ENCODE measurements at regions of chr3 and their contacts with region 1.

Region 1: GRCh38 chr3:171772427-171773056 is 37.7 kb downstream of the PLD1 start:
- DNase-seq: peak in 1 of 2 donors; percentile 28
- ATAC-seq: peak in 1 of 2 donors; percentile 46
- H3K4me3 ChIP-seq: no peak overlapping the region
- H3K27ac ChIP-seq: no peak overlapping the region
- H3K4me1 ChIP-seq: peaks cover 0 to 5% of the 10 kb centered on the region in 2 donors
- H3K27me3 ChIP-seq: no peaks in the 10 kb centered on the region
- CTCF ChIP-seq: peak; percentile 35 to 62 (median 46)
- POLR2A ChIP-seq: no peak

Region 2: GRCh38 chr3:171646357-171647133 is 126.0 kb before region 1 on chr3:
- in situ Hi-C with region 1: loop called (anchors 5 to 25 kb)
- intact Hi-C with region 1: loop called (anchors 1 kb)
- DNase-seq: no peak
- ATAC-seq: peak; percentile 55 to 69
- H3K4me3 ChIP-seq: no peak overlapping the region
- H3K27ac ChIP-seq: peak overlapping the region in 2 of 4 donors; percentile 3 to 21
- H3K4me1 ChIP-seq: peaks cover 5 to 6% of the 10 kb centered on the region in 2 donors
- H3K27me3 ChIP-seq: no peaks in the 10 kb centered on the region
- CTCF ChIP-seq: peak; percentile 35 to 68 (median 39)
- POLR2A ChIP-seq: no peak

Measured in gastrocnemius medialis (tissue), 4 donors.